MCF 10A (cell line): ENCODE measurements at regions of chr14 and their contacts with region 1.

Region 1: GRCh38 chr14:65222440-65222858 is 120.1 kb upstream of the MAX start:
- DNase-seq: peak; percentile 71
- H3K4me3 Mint-ChIP-seq: no peak overlapping the region
- H3K27ac Mint-ChIP-seq: peak overlapping the region; percentile 77
- H3K4me1 Mint-ChIP-seq: peaks cover 27% of the 10 kb centered on the region
- H3K27me3 Mint-ChIP-seq: no peaks in the 10 kb centered on the region
- CTCF ChIP-seq: peak; percentile 88

Region 2: GRCh38 chr14:65356327-65356852 is 133.9 kb after region 1 on chr14:
- CTCF ChIA-PET with region 1: interaction called, 4 read pairs
- POLR2A ChIA-PET with region 1: interaction called, 5 read pairs
- intact Hi-C with region 1: loop called (anchors 1 kb)
- DNase-seq: peak; percentile 99
- H3K4me3 Mint-ChIP-seq: peak overlapping the region; percentile 39
- H3K27ac Mint-ChIP-seq: peak overlapping the region; percentile 88
- H3K4me1 Mint-ChIP-seq: peaks cover 42% of the 10 kb centered on the region
- H3K27me3 Mint-ChIP-seq: no peaks in the 10 kb centered on the region
- CTCF ChIP-seq: no peak

Region 3: GRCh38 chr14:65750906-65751305 is 528.5 kb after region 1 on chr14:
- CTCF ChIA-PET with region 1: no interaction called
- POLR2A ChIA-PET with region 1: no interaction called
- intact Hi-C with region 1: no loop called
- DNase-seq: no peak
- H3K4me3 Mint-ChIP-seq: no peak overlapping the region
- H3K27ac Mint-ChIP-seq: no peak overlapping the region
- H3K4me1 Mint-ChIP-seq: no peaks in the 10 kb centered on the region
- H3K27me3 Mint-ChIP-seq: no peaks in the 10 kb centered on the region
- CTCF ChIP-seq: no peak

Region 4: DNA sequence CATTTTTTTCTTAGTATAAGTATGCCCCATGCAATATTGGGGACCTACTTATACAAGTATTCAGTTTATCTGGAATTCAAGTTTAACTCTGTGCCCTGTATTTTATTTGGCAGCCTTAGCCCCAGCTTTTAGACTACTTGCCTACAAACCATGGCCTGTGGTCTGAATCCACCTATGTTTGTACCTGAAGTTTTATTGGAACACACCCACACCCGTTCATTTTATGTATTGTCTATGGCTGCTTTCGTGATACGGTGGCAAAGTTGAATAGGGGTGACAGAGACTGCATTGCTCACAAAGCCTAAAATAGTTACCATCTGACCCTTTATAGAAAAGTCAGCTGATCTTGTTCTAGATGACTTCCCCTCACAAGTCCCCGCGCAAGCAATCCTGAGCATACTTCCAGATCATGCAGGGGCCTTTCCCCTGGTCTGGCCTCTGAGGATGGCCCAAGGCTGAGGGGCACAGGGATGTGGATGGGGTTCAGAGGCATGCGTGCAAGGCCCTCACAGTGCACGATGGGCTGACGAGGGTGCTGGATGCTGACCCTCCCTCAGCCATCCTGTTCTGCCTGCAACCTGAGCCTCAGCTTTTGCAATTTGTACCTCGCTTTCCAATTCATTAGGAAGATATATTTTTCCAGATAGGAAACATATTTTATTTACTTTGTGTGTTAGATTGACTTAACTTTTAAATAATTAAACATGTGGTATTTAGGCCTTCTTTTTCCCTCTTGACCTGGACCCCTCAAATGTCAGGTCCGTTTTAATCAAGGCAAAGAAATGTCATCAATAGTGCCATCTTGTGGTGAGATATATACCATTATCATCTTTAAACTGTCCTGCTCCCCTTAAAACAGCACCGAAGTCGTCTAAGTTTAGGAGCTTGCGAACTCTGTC is 736.5 kb after region 1 on chr14:
- CTCF ChIA-PET with region 1: interaction called, 11 read pairs
- POLR2A ChIA-PET with region 1: no interaction called
- intact Hi-C with region 1: no loop called
- DNase-seq: peak; percentile 50
- H3K4me3 Mint-ChIP-seq: no peak overlapping the region
- H3K27ac Mint-ChIP-seq: no peak overlapping the region
- H3K4me1 Mint-ChIP-seq: no peaks in the 10 kb centered on the region
- H3K27me3 Mint-ChIP-seq: peaks cover 6% of the 10 kb centered on the region
- CTCF ChIP-seq: peak; percentile 44